Transverse colon (tissue), 4 donors: ENCODE measurements at regions of chr1 and their contacts with region 1.

Region 1: DNA sequence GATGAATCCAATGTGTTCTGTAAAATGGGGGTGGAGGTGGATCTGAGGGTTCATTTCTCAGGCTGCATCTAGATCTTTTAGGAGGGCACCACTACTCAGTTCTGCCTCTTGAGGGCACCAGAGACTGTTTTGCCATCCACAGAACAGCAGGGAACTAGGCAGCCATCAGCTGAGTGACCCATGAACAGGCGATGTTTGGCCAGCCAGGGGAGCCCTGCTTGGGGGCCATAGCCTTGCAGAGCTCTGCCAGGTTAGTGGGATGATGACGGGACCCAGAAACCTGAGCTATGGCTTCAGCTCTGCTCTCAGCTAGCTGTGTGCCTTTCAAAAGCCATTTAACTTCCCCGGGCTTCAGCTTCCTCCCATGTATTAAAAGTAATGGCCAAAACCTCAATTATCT is 13.4 kb upstream of the NOS1AP start:
- DNase-seq: peak; percentile 72
- H3K4me3 ChIP-seq: no peak overlapping the region
- H3K27ac ChIP-seq: no peak overlapping the region
- H3K4me1 ChIP-seq: peaks cover 0 to 5% (median 0%) of the 10 kb centered on the region in 4 donors
- H3K27me3 ChIP-seq: no peaks in the 10 kb centered on the region
- CTCF ChIP-seq: peak; percentile 83 to 93 (median 86)
- EP300 ChIP-seq: no peak
- POLR2A ChIP-seq: no peak

Region 2: DNA sequence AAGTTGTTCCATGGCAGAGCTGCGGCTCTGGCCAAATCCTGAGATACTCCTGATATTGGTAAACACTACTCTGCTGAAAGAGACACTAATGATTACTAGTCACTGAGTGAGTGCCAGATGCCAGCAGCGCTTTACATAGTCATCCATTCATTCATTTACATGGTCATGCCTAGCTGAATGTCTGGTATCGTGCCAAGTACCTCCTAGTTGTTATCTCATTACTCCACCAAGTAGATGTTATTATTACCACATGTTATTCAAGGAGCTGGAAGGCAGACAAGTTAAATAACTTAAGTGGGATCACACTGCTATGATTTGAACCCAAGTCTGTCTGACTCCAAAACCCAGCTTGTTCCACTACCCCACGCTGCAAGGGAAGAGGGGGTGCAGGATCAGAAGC is 37.0 kb before region 1 on chr1:
- in situ Hi-C with region 1: no loop called
- intact Hi-C with region 1: no loop called
- DNase-seq: no peak
- H3K4me3 ChIP-seq: no peak overlapping the region
- H3K27ac ChIP-seq: no peak overlapping the region
- H3K4me1 ChIP-seq: peaks cover 0 to 12% (median 9%) of the 10 kb centered on the region in 4 donors
- H3K27me3 ChIP-seq: peaks cover 13% of the 10 kb centered on the region
- CTCF ChIP-seq: no peak
- EP300 ChIP-seq: no peak
- POLR2A ChIP-seq: no peak

Region 3: DNA sequence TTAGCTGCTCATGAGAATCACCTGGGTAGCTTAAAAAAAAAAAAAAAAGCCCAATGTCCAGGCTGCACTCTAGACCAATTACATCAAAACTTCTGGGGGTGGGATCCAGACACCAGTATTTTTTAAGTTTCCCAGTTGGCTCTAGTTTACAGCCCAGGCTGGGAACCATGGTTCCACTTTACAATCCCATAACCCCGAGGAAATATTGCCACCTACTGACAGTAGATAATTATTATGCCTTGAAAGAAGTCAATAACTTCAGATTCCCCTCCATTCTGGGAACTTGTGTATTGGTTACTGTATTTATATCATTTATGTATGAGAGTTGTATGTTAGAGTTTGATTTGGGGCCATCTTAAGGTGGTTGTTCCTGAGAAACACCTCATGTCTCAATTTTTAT is 220.4 kb after region 1 on chr1:
- in situ Hi-C with region 1: loop called in 2 of 4 experiments (anchors 10 kb)
- intact Hi-C with region 1: loop called (anchors 5 kb)
- DNase-seq: no peak
- H3K4me3 ChIP-seq: no peak overlapping the region
- H3K27ac ChIP-seq: no peak overlapping the region
- H3K4me1 ChIP-seq: no peaks in the 10 kb centered on the region
- H3K27me3 ChIP-seq: no peaks in the 10 kb centered on the region
- CTCF ChIP-seq: peak in 4 of 5 experiments; percentile 37 to 42 (median 38)
- EP300 ChIP-seq: no peak
- POLR2A ChIP-seq: no peak

Region 4: DNA sequence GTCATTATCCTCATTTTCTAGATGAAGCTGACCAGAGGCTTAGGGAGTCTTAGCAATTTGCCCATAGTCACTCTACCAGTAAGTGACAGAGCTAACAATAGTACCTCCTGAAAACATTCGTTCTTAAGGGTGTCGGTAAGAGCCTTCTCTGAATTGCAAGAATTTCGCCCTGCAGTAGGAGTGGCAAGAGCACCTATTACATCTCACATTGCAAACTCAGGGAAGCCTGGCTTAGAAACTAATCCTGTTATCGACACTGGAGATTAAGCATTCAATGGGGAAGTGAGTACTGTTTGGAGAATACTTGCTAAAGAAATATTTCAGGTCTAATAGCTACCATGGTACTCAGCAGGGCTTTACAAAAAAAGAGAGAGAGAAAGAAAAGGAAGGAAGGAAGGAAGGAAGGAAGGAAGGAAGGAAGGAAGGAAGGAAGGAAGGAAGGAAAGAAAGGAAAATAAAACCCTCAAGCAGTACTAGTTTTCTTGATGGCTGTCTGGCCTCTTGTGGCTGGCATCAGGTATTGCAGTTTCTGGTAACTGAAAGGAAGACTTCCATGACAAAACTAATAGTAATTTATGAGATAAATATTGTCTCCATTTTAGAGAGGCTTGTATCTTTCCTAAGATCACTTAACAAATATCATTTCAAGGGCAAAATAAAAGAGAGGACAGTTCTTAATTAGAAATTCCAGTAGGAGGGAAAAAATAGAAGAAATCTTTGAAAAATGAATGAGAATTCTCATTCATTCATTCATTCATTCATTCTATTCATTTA is 335.9 kb after region 1 on chr1:
- in situ Hi-C with region 1: loop called in 3 of 4 experiments (anchors 10 kb)
- intact Hi-C with region 1: loop called (anchors 5 kb)
- DNase-seq: no peak
- H3K4me3 ChIP-seq: no peak overlapping the region
- H3K27ac ChIP-seq: no peak overlapping the region
- H3K4me1 ChIP-seq: peaks cover 3 to 21% (median 5%) of the 10 kb centered on the region in 4 donors
- H3K27me3 ChIP-seq: peaks cover 8% of the 10 kb centered on the region
- CTCF ChIP-seq: peak; percentile 80 to 95 (median 83)
- EP300 ChIP-seq: no peak
- POLR2A ChIP-seq: no peak

Region 5: DNA sequence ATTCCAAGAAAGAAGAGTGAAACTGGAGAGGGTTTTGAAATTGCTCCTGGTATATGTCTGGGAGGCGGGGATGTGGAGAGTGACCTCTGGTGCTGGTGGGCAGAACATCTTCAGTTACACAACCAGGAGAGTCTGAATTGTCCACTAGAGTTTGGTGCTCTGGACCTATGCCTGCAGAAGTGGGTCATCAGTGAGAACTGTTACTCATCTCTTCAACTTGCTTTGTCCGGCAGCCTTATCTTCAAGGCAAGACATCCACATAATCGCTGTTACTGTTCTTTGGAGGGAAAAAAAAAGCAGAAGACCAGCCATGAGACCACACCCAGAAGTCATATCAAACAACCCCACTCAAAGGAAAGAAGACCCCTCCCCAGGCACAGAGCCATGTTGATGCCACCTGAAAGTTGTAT is 341.0 kb after region 1 on chr1:
- in situ Hi-C with region 1: loop called in 2 of 4 experiments (anchors 10 kb)
- intact Hi-C with region 1: loop called (anchors 5 kb)
- DNase-seq: no peak
- H3K4me3 ChIP-seq: no peak overlapping the region
- H3K27ac ChIP-seq: no peak overlapping the region
- H3K4me1 ChIP-seq: no peaks in the 10 kb centered on the region
- H3K27me3 ChIP-seq: peaks cover 8% of the 10 kb centered on the region
- CTCF ChIP-seq: no peak
- EP300 ChIP-seq: no peak
- POLR2A ChIP-seq: no peak